Naive thymus-derived CD4-positive, alpha-beta T cell (primary cell): ENCODE measurements at regions of chr6 and their contacts with region 1.

Region 1: DNA sequence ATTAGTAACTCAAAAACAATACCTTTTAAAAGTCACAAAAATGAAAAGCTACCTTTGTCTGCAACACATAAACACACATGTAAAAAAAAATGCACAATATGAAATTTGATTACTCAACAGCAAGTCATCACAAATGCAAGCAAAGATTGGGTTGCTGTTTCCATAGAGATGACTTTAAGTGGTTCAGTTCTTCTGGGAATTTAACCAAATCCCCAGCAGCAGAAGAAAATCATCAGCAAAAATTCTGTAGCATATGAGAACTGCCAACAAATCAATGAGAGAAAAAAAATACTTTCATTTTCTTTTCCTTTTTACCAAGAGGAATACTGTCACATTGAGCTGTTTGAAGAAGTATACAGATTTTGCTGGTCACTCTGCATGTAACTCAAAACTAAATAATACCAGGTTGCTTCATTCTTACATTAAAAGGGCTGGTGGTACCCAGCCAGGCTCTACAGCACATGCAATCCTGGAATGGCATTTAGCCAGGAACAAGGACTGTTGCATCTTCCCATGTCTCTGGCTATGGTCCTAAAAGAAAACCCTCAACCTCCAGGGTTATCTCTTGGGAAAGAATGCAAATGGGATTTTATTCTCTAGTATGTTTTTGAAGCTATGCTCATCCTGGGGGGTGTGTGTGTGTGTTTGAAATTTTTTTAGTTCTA is 158.3 kb downstream of the OPRM1 start:
- DNase-seq: no peak
- ATAC-seq: no peak
- H3K4me3 ChIP-seq: no peak overlapping the region
- H3K4me3 Mint-ChIP-seq: peak overlapping the region in 2 of 10 donors; percentile 28 to 41
- H3K27ac ChIP-seq: no peak overlapping the region
- H3K27ac Mint-ChIP-seq: peak overlapping the region in 6 of 9 donors; percentile 22 to 80 (median 64)
- H3K4me1 ChIP-seq: peaks cover 0 to 13% of the 10 kb centered on the region in 2 donors
- H3K4me1 Mint-ChIP-seq: peaks cover 14 to 94% (median 85%) of the 10 kb centered on the region in 7 donors
- H3K27me3 ChIP-seq: no peaks in the 10 kb centered on the region
- H3K27me3 Mint-ChIP-seq: no peaks in the 10 kb centered on the region

Region 2: DNA sequence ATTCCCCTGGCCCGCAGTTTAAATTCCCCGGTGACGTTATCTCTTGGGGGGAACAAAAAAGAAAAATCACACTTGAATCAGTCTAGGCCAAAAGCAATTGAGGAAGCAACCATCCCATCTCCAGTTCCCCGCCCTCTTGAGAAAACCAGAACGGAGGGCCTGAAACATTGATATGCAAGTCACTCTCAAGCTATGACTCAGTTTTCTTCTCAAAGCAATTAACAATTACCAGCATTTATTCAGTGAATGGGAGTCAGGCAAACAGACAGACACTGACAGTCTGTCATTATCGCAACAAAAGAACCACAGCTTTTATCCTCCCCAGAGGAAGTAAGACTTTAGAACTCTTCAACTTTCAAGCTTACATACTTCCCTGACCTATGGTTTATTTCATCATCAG is 57.4 kb before region 1 on chr6:
- CTCF ChIA-PET with region 1: no interaction called
- POLR2A ChIA-PET with region 1: no interaction called
- intact Hi-C with region 1: no loop called
- DNase-seq: no peak
- ATAC-seq: peak; percentile 80
- H3K4me3 ChIP-seq: no peak overlapping the region
- H3K4me3 Mint-ChIP-seq: no peak overlapping the region
- H3K27ac ChIP-seq: no peak overlapping the region
- H3K27ac Mint-ChIP-seq: no peak overlapping the region
- H3K4me1 ChIP-seq: no peaks in the 10 kb centered on the region
- H3K4me1 Mint-ChIP-seq: peaks cover 0 to 7% (median 6%) of the 10 kb centered on the region in 7 donors
- H3K27me3 ChIP-seq: no peaks in the 10 kb centered on the region
- H3K27me3 Mint-ChIP-seq: peaks cover 0 to 10% (median 5%) of the 10 kb centered on the region in 5 donors

Region 3: GRCh38 chr6:154210683-154211082 is 13.4 kb after region 1 on chr6:
- CTCF ChIA-PET with region 1: no interaction called
- POLR2A ChIA-PET with region 1: interaction called, 4 read pairs
- intact Hi-C with region 1: loop called in 1 of 2 experiments (anchors 2 kb)
- DNase-seq: no peak
- ATAC-seq: no peak
- H3K4me3 ChIP-seq: no peak overlapping the region
- H3K4me3 Mint-ChIP-seq: no peak overlapping the region
- H3K27ac ChIP-seq: no peak overlapping the region
- H3K27ac Mint-ChIP-seq: peak overlapping the region in 2 of 9 donors; percentile 23 to 45
- H3K4me1 ChIP-seq: no peaks in the 10 kb centered on the region
- H3K4me1 Mint-ChIP-seq: peaks cover 0 to 59% (median 43%) of the 10 kb centered on the region in 7 donors
- H3K27me3 ChIP-seq: no peaks in the 10 kb centered on the region
- H3K27me3 Mint-ChIP-seq: no peaks in the 10 kb centered on the region